B cell (primary cell): ENCODE measurements at regions of chr4 and their contacts with region 1.

Region 1: DNA sequence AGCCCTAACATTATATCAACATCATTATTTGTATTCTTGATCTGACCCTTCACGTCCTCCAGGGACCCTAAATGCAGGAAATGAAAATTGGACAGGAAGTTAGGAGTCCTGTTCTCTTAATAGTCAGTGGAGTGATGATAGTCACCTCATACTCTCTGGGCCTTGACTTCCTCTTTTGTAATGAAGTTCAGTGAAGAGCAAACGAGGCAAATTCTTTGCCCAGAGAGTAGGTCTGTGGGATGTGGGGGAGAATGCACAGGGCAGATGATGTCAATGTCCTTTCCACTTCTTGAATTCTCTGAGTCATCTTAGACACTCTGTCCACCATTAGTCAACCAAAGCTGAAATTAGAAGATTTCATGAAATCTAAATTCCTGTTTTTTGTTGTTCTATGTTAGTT is 17.1 kb upstream of the GPRIN3 start:
- DNase-seq: peak; percentile 70
- ATAC-seq: peak; percentile 97
- H3K4me3 ChIP-seq: no peak overlapping the region
- H3K4me3 Mint-ChIP-seq: peak overlapping the region; percentile 21
- H3K27ac ChIP-seq: no peak overlapping the region
- H3K27ac Mint-ChIP-seq: no peak overlapping the region
- H3K4me1 ChIP-seq: peaks cover 12 to 15% of the 10 kb centered on the region in 2 donors
- H3K4me1 Mint-ChIP-seq: peaks cover 24% of the 10 kb centered on the region
- H3K27me3 ChIP-seq: no peaks in the 10 kb centered on the region
- H3K27me3 Mint-ChIP-seq: no peaks in the 10 kb centered on the region
- CTCF ChIP-seq: no peak

Region 2: DNA sequence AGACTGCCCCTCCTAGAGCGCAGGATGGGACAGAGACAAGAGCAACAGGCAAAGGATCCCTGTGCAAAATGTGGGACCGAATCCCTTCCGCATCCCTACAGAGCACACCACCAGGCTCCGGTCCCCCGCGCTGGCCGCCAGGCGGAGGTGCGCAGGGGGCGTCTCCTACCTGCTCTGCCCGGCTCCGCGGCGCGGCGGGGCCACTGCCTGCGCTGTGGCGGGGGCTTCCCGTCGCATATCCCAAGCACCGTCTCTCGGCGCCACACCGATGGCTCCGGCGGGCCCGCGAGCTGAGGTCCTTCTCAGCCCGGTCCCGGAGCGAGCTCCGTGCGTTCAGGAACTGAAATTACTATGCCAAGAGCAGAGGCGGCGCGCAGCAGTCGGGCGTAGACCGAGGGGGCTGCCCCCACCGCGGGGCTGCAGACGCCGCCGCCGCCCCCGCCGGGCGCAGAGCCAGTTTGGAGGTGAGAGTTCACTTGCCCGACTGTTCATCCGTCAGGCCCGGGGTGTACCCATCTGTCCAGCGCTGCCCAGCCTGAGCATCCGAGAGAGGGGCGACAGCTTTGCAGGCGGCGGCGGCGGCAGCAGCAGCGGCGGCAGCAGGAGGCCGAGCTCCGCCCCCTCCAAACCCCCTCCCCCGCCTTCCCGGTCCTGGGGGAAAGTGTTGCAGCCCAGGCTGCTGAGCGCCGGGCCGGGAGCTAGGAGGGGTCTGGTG is 17.1 kb before region 1 on chr4 and contains the start of gene GPRIN3:
- CTCF ChIA-PET with region 1: interaction called, 8 read pairs
- POLR2A ChIA-PET with region 1: interaction called, 3 read pairs
- intact Hi-C with region 1: loop called (anchors 2 kb)
- DNase-seq: peak; percentile 74
- ATAC-seq: peak; percentile 88
- H3K4me3 ChIP-seq: peak within 1 kb of the TSS; percentile 31 to 81 (median 65)
- H3K4me3 Mint-ChIP-seq: peak within 1 kb of the TSS; percentile 83
- H3K27ac ChIP-seq: peak within 1 kb of the TSS in 1 of 2 donors; percentile 34
- H3K27ac Mint-ChIP-seq: peak within 1 kb of the TSS; percentile 11
- H3K4me1 ChIP-seq: peaks cover 19% of the 10 kb centered on the region in 2 donors
- H3K4me1 Mint-ChIP-seq: peaks cover 32% of the 10 kb centered on the region
- H3K27me3 ChIP-seq: peaks cover 0 to 28% (median 12%) of the 10 kb centered on the region in 4 experiments
- H3K27me3 Mint-ChIP-seq: peaks cover 13% of the 10 kb centered on the region
- CTCF ChIP-seq: no peak
- total RNA-seq, gene GPRIN3: 1.1 and 1.5 TPM in 2 replicates

Region 3: DNA sequence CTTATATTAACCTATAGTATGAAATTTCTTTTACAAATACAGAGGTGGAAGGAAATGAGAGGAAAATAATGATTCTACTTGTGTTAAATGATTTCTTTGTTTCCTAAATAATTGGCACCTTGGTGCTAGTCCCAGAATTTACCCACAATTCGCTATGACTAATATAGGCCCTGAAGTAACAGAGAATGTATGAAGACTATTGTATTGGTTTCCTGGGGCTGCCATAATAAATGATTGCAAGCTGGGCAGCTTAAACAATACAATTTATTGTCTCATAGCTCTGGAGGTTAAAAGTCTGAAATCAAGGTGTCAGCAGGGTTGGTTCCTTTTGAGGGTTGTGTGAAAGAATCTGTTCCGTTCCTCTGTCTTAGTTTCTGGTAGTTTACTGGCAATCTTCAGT is 57.8 kb after region 1 on chr4:
- CTCF ChIA-PET with region 1: no interaction called
- POLR2A ChIA-PET with region 1: no interaction called
- intact Hi-C with region 1: no loop called
- DNase-seq: no peak
- ATAC-seq: no peak
- H3K4me3 ChIP-seq: no peak overlapping the region
- H3K4me3 Mint-ChIP-seq: no peak overlapping the region
- H3K27ac ChIP-seq: no peak overlapping the region
- H3K27ac Mint-ChIP-seq: no peak overlapping the region
- H3K4me1 ChIP-seq: no peaks in the 10 kb centered on the region
- H3K4me1 Mint-ChIP-seq: no peaks in the 10 kb centered on the region
- H3K27me3 ChIP-seq: no peaks in the 10 kb centered on the region
- H3K27me3 Mint-ChIP-seq: peaks cover 19% of the 10 kb centered on the region
- CTCF ChIP-seq: no peak